GM18951 (cell line): ENCODE measurements at regions of chr10 and their contacts with region 1.

Region 1: GRCh38 chr10:103605359-103606095 is 112.0 kb downstream of the NEURL1 start:
- POLR2A ChIP-seq: no peak

Region 2: GRCh38 chr10:103678178-103678526 is 72.6 kb after region 1 on chr10:
- in situ Hi-C with region 1: loop called (anchors 10 kb)
- POLR2A ChIP-seq: peak; percentile 32

Region 3: GRCh38 chr10:104941662-104942061 is 1336.1 kb after region 1 on chr10:
- in situ Hi-C with region 1: no loop called
- POLR2A ChIP-seq: no peak